MCF 10A (cell line): ENCODE measurements at regions of chr15 and their contacts with region 1.

Region 1: DNA sequence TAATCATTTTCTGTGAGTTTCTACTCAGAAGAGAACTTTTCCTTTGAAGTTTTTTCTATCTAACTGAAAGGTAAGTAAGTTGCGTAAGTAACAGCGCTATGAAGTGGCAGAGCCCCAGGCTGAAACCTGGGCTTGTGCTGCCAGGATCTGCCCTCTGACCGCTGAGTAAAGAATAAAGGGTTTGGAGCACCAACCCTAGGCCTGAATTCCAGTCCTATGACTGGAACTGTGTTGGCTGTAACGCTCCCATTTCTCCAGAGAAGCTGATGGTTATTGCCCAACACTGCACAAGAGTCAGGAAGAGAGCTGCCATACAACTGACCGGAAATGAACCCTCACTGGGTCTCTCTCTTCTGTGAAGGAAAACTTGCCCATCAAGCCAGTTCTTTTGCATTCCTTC is 87.1 kb downstream of the FOXB1 start:
- DNase-seq: peak; percentile 98
- H3K4me3 Mint-ChIP-seq: no peak overlapping the region
- H3K27ac Mint-ChIP-seq: peak overlapping the region; percentile 81
- H3K4me1 Mint-ChIP-seq: peaks cover 43% of the 10 kb centered on the region
- H3K27me3 Mint-ChIP-seq: no peaks in the 10 kb centered on the region
- CTCF ChIP-seq: no peak

Region 2: DNA sequence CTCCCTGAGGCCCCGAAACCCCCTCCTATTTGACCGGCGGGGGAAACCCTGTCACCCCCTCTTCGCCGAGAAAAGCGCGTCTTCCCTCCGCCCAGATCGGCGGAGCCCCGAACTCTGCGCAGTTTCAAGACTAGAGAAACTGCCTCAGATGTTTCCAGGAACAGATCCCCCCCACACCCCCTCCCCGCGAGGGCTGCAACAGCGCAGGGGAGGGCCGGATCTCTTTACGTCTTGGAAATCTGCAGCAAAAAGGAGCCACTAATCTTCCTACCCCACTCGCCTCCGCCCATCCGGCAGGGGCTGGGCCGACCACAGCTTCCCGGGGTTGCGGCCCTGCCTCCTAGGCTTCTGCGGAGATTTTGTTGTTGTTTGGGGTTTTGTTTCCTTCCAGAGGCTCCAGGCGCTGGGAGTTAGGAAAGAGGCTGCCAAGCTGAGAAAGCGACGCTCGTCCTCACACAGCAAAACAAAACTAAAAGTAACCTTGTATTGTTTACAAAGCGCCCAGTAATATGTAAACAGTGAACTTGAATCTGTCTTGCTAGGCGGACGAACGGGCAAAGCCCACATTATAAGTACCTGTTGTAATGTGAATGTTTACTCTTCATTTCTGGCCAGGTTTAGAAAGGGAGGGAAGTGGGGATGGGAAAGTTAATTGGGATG is 84.8 kb before region 1 on chr15:
- CTCF ChIA-PET with region 1: interaction called, 3 read pairs
- POLR2A ChIA-PET with region 1: interaction called, 12 read pairs
- intact Hi-C with region 1: no loop called
- DNase-seq: peak; percentile 78
- H3K4me3 Mint-ChIP-seq: peak overlapping the region; percentile 93
- H3K27ac Mint-ChIP-seq: peak overlapping the region; percentile 96
- H3K4me1 Mint-ChIP-seq: peaks cover 19% of the 10 kb centered on the region
- H3K27me3 Mint-ChIP-seq: peaks cover 40% of the 10 kb centered on the region
- CTCF ChIP-seq: no peak

Region 3: GRCh38 chr15:60052796-60053195 is 38.4 kb before region 1 on chr15:
- CTCF ChIA-PET with region 1: no interaction called
- POLR2A ChIA-PET with region 1: interaction called, 15 read pairs
- intact Hi-C with region 1: no loop called
- DNase-seq: no peak
- H3K4me3 Mint-ChIP-seq: no peak overlapping the region
- H3K27ac Mint-ChIP-seq: peak overlapping the region; percentile 6
- H3K4me1 Mint-ChIP-seq: peaks cover 14% of the 10 kb centered on the region
- H3K27me3 Mint-ChIP-seq: no peaks in the 10 kb centered on the region
- CTCF ChIP-seq: no peak

Region 4: GRCh38 chr15:60070838-60071493 is 20.2 kb before region 1 on chr15:
- CTCF ChIA-PET with region 1: interaction called, 10 read pairs
- POLR2A ChIA-PET with region 1: interaction called, 50 read pairs
- intact Hi-C with region 1: loop called (anchors 2 kb)
- DNase-seq: peak; percentile 91
- H3K4me3 Mint-ChIP-seq: peak overlapping the region; percentile 38
- H3K27ac Mint-ChIP-seq: peak overlapping the region; percentile 75
- H3K4me1 Mint-ChIP-seq: peaks cover 18% of the 10 kb centered on the region
- H3K27me3 Mint-ChIP-seq: no peaks in the 10 kb centered on the region
- CTCF ChIP-seq: no peak

Region 5: DNA sequence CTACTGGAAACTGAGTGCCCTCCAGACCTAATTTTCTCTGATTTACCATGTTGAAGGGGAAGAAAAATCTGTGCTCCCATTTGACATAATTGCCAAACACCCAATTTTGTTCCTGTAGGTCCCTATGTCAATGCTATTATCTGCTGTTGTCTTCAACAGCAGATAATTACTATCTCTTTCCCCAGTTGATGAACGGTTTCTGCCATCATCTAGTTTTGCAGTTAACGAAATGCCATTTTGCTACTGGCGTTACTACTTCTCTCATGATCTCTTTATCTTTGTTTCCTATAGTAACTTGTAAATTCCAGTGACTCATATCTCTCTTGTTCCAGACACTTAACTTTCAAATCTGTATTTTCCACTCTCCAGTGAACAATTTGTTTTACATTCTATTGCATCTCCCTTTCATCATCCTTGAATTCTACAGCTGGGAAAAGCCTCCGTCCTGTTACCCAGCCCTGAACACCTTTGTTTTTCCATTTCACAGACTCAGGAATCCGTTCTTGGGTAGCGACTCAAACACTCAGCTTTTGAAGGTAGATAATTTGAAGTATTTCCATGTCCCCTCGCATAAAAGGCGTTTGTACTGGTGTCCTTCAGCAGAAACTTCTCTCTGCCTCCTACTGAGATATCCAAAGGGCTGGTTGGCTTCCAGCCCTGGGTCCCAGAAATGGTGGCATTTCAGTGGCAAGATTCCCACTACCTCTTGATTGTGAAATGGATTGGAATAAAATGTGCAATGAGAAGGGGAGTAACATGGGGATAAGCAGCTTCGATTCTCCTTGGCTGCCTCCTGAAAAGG is 24.6 kb after region 1 on chr15:
- CTCF ChIA-PET with region 1: interaction called, 3 read pairs
- POLR2A ChIA-PET with region 1: interaction called, 11 read pairs
- intact Hi-C with region 1: no loop called
- DNase-seq: peak; percentile 11
- H3K4me3 Mint-ChIP-seq: no peak overlapping the region
- H3K27ac Mint-ChIP-seq: peak overlapping the region; percentile 42
- H3K4me1 Mint-ChIP-seq: peaks cover 27% of the 10 kb centered on the region
- H3K27me3 Mint-ChIP-seq: no peaks in the 10 kb centered on the region
- CTCF ChIP-seq: no peak

Region 6: DNA sequence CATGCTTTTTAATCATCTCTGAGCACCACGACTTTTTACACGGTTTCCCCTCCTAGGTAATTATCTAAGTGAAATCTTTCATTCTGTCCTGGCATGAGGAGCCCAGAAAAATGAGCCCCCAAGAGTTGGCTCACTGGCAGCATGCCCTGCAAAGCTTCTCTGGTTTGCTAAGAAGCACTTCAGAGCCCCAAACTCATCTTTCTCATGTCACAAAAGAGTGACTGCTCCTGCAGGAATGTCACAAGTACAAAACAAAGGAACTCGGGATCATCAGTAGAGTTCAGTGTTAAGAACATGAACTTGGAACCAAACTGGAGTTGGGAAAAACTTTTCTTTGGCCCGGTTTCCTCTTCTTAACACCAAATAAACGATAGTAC is 36.8 kb after region 1 on chr15:
- CTCF ChIA-PET with region 1: interaction called, 6 read pairs
- POLR2A ChIA-PET with region 1: interaction called, 13 read pairs
- intact Hi-C with region 1: loop called (anchors 1 kb)
- DNase-seq: no peak
- H3K4me3 Mint-ChIP-seq: peak overlapping the region; percentile 85
- H3K27ac Mint-ChIP-seq: peak overlapping the region; percentile 94
- H3K4me1 Mint-ChIP-seq: peaks cover 18% of the 10 kb centered on the region
- H3K27me3 Mint-ChIP-seq: no peaks in the 10 kb centered on the region
- CTCF ChIP-seq: no peak